OCI-LY7 (cell line): ENCODE measurements at regions of chr6 and their contacts with region 1.

Region 1: GRCh38 chr6:36701401-36701991 is 3.9 kb downstream of the RAB44 start:
- DNase-seq: peak; percentile 69
- H3K4me3 ChIP-seq: no peak overlapping the region
- H3K27ac ChIP-seq: no peak overlapping the region
- H3K4me1 ChIP-seq: peaks cover 5% of the 10 kb centered on the region
- CTCF ChIP-seq: peak; percentile 89

Region 2: GRCh38 chr6:36615018-36615761 is 86.3 kb before region 1 on chr6:
- CTCF ChIA-PET with region 1: no interaction called
- POLR2A ChIA-PET with region 1: interaction called, 4 read pairs
- intact Hi-C with region 1: loop called (anchors 1 kb)
- DNase-seq: peak; percentile 78
- H3K4me3 ChIP-seq: no peak overlapping the region
- H3K27ac ChIP-seq: no peak overlapping the region
- H3K4me1 ChIP-seq: peaks cover 14% of the 10 kb centered on the region
- CTCF ChIP-seq: peak; percentile 91

Region 3: DNA sequence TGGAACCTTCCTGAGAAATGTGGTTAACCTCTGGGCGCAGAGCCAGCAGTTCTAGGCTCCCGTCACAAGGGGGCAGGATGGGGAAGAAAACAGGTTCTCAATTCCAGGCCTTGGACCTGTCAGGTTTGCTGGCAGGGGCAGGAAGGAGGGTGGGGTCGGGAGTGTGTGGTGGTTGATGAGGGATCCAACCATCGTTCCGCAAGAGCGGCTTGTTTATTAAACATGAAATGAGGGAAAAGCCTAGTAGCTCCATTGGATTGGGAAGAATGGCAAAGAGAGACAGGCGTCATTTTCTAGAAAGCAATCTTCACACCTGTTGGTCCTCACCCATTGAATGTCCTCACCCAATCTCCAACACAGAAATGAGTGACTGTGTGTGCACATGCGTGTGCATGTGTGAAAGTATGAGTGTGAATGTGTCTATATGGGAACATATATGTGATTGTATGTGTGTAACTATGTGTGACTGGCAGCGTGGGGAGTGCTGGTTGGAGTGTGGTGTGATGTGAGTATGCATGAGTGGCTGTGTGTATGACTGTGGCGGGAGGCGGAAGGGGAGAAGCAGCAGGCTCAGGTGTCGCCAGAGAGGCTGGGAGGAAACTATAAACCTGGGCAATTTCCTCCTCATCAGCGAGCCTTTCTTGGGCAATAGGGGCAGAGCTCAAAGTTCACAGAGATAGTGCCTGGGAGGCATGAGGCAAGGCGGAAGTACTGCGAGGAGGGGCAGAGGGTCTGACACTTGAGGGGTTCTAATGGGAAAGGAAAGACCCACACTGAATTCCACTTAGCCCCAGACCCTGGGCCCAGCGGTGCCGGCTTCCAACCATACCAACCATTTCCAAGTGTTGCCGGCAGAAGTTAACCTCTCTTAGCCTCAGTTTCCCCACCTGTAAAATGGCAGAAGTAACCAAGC is 77.7 kb before region 1 on chr6:
- CTCF ChIA-PET with region 1: interaction called, 10 read pairs
- POLR2A ChIA-PET with region 1: no interaction called
- intact Hi-C with region 1: loop called (anchors 1 kb)
- DNase-seq: peak; percentile 83
- H3K4me3 ChIP-seq: no peak overlapping the region
- H3K27ac ChIP-seq: no peak overlapping the region
- H3K4me1 ChIP-seq: peaks cover 22% of the 10 kb centered on the region
- CTCF ChIP-seq: peak; percentile 96

Region 4: GRCh38 chr6:36685936-36686667 is 15.4 kb before region 1 on chr6:
- CTCF ChIA-PET with region 1: interaction called, 16 read pairs
- POLR2A ChIA-PET with region 1: no interaction called
- intact Hi-C with region 1: loop called (anchors 2 kb)
- DNase-seq: no peak
- H3K4me3 ChIP-seq: no peak overlapping the region
- H3K27ac ChIP-seq: no peak overlapping the region
- H3K4me1 ChIP-seq: peaks cover 40% of the 10 kb centered on the region
- CTCF ChIP-seq: no peak